ENCODE measurements at regions of chr2 and their contacts with region 1.

Region 1: GRCh38 chr2:39723946-39724827 is 54.9 kb downstream of the THUMPD2 start:
- DNase-seq: no peak
- CTCF ChIP-seq: no peak

Region 2: GRCh38 chr2:39379643-39380524 is 344.3 kb before region 1 on chr2:
- in situ Hi-C with region 1: loop called (anchors 25 kb)
- DNase-seq: peak; percentile 49
- CTCF ChIP-seq: peak; percentile 52

Region 3: DNA sequence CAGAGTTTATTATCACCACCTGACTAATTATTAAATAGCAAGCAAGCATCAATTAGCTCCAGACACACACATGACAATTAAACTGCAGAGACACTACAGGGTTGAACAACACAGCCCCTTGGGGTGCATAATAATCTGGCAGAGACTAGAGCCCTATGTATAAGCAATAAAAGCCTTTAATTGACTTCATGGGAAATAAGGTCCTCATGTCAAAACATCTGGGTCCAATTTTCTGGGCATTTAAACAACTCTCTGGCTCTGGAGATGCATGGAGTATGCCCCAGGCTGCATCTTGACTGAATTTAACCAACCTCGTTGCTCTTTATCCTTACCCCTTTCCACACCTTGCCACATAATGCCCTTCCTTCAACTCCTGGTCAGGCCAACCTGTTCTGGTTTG is 325.6 kb after region 1 on chr2:
- in situ Hi-C with region 1: no loop called
- DNase-seq: no peak
- CTCF ChIP-seq: no peak

Region 4: GRCh38 chr2:40062381-40062780 is 338.2 kb after region 1 on chr2:
- in situ Hi-C with region 1: no loop called
- DNase-seq: no peak
- CTCF ChIP-seq: no peak

Region 5: DNA sequence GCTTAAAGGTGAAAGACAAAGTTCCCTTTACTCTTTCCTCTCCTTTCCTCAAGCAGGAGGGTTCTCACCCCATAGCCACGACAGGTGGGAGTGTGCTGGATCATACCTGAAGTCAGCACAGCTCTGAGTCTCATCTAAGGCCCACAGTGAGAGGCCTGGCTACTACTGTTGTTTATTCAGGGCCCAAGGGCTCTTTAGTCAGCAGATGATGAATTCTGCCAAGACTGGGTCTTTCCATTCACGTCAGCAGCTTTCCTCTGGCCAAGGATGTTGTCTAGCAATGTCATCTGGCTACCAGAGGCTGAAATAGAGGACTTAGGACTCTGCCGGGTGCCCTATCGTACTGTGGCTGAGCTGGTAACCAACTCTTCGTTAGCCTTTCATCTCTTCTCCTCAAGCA is 363.2 kb after region 1 on chr2:
- in situ Hi-C with region 1: no loop called
- DNase-seq: no peak
- CTCF ChIP-seq: no peak

Measured in GM13976 (cell line).